PC-9 (cell line): ENCODE measurements at regions of chr5 and their contacts with region 1.

Region 1: GRCh38 chr5:57816108-57816507 is 333.5 kb upstream of the ACTBL2 start:
- DNase-seq: peak; percentile 51 to 81
- H3K4me3 ChIP-seq: no peak overlapping the region
- H3K27ac ChIP-seq: peak overlapping the region; percentile 73
- H3K4me1 ChIP-seq: peaks cover 22% of the 10 kb centered on the region
- H3K27me3 ChIP-seq: no peaks in the 10 kb centered on the region
- CTCF ChIP-seq: no peak

Region 2: DNA sequence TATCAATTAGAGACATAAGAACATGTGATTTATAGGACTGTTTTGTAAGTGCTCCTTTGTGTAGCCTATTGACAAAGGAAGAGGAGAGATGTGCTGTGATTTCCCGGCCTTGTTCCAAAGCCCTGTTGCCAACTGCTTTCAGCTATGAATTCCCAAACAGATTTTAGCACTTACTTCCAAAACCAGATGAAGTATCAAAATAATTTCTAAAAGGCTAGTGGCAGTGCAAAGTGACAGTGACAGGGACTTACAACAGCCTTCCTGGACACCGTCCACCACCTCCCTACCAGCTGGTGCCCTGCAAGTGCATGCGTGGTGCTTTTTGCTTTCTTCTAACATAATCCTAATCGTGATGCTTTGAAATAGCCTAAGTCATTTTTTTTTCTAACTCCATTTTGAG is 79.4 kb before region 1 on chr5:
- CTCF ChIA-PET with region 1: no interaction called
- POLR2A ChIA-PET with region 1: interaction called, 3 read pairs
- intact Hi-C with region 1: loop called (anchors 2 kb)
- DNase-seq: no peak
- H3K4me3 ChIP-seq: no peak overlapping the region
- H3K27ac ChIP-seq: peak overlapping the region; percentile 92
- H3K4me1 ChIP-seq: peaks cover 49% of the 10 kb centered on the region
- H3K27me3 ChIP-seq: no peaks in the 10 kb centered on the region
- CTCF ChIP-seq: no peak

Region 3: DNA sequence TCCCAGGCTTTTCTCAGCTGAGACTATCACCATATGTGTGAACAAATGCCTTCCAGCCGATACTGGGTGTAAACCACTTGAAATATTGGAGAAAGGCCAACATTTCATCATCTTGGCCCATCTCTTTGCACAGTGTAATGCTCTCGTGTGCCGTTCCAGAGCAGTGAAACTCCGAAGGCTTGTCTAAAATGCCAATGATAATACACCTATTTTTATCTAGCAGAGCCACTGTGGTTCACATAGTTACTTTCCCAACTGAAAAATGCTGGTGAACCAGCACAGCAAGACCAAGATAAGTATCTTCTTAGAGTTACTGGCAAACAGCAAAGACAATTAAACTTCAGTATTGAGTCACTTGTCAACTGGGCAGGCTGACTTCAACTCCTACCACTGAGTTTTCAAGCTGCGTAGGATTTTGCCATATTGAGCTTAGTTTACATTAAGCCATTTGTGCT is 46.4 kb after region 1 on chr5:
- CTCF ChIA-PET with region 1: no interaction called
- POLR2A ChIA-PET with region 1: no interaction called
- intact Hi-C with region 1: loop called (anchors 1 kb)
- DNase-seq: peak; percentile 69 to 97
- H3K4me3 ChIP-seq: no peak overlapping the region
- H3K27ac ChIP-seq: peak overlapping the region; percentile 99
- H3K4me1 ChIP-seq: peaks cover 31% of the 10 kb centered on the region
- H3K27me3 ChIP-seq: no peaks in the 10 kb centered on the region
- CTCF ChIP-seq: no peak

Region 4: GRCh38 chr5:57911438-57911837 is 95.3 kb after region 1 on chr5:
- CTCF ChIA-PET with region 1: no interaction called
- POLR2A ChIA-PET with region 1: interaction called, 10 read pairs
- intact Hi-C with region 1: no loop called
- DNase-seq: no peak
- H3K4me3 ChIP-seq: no peak overlapping the region
- H3K27ac ChIP-seq: no peak overlapping the region
- H3K4me1 ChIP-seq: no peaks in the 10 kb centered on the region
- H3K27me3 ChIP-seq: no peaks in the 10 kb centered on the region
- CTCF ChIP-seq: no peak